ENCODE measurements at regions of chr9 and their contacts with region 1.

Region 1: DNA sequence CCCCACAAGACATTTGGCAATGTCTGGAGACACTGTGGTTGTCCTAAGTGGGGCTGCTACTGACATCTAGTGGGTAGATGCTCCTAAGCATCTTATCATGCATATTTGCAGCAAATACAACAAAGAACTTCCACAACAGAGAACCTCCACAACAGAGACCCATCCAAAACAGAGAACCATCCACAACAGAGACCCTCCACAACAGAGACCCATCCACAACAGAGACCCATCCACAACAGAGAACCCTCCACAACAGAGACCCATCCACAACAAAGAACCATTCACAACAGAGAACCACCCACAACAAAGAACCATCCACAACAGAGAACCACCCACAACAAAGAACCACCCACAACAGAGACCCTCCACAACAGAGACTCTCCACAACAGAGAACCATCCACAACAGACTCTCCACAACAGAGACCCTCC is 32.8 kb downstream of the ARPC5L start:
- DNase-seq: no peak
- H3K4me3 ChIP-seq: no peak overlapping the region
- H3K27ac ChIP-seq: no peak overlapping the region
- H3K4me1 ChIP-seq: no peaks in the 10 kb centered on the region
- H3K27me3 ChIP-seq: no peaks in the 10 kb centered on the region
- CTCF ChIP-seq: peak in 2 of 3 experiments; percentile 60 to 67; a peak in 3 of 4 replicates
- EP300 ChIP-seq: no peak
- POLR2A ChIP-seq: no peak
- RAD21 ChIP-seq: peak; percentile 69 to 85

Region 2: DNA sequence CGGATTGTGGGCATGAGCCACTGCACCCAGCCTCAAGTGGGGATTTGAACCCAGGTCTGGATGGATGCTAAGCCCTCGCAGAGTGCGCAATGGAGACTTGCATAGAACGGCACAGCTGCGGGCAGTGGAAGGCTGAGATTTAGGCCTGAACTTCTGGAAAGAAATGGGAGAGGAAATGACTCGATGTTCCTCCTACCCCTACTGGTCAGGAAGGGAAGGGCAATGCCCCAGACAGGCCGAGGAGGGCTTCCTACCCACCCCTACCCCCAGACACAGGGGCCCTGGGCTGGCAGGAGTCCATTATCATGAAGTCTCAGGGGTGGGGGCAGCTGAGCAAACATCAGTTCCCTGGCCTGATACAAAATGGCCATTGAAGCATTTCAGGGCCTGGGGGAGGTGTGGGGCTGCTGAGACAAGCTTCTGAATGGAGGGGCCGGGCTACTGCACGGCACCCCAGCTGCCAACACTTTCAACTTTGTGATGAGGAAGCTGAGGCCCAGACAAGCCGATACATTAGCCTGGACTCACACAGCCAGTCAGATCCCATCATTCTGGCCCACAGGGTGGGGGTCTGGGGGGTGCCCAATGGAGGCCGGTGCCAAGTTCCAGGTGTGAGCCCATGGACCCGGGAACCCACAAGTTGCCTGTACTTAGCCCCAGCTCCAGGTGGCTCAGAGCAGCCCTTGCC is 55.0 kb before region 1 on chr9:
- CTCF ChIA-PET with region 1: interaction called, 15 read pairs
- POLR2A ChIA-PET with region 1: no interaction called
- DNase-seq: peak in 1 of 2 experiments; percentile 84
- H3K4me3 ChIP-seq: no peak overlapping the region
- H3K27ac ChIP-seq: 0 out of 2 replicates have a peak overlapping the region, but pooled peaks have one; percentile 5
- H3K4me1 ChIP-seq: peaks cover 0 to 14% (median 3%) of the 10 kb centered on the region in 4 experiments; a peak in 4 of 7 replicates
- H3K27me3 ChIP-seq: no peaks in the 10 kb centered on the region
- CTCF ChIP-seq: peak; percentile 71 to 89 (median 78)
- EP300 ChIP-seq: no peak
- POLR2A ChIP-seq: no peak
- RAD21 ChIP-seq: peak; percentile 50 to 61

Region 3: GRCh38 chr9:124880501-124880900 is 14.3 kb before region 1 on chr9:
- CTCF ChIA-PET with region 1: interaction called, 55 read pairs
- POLR2A ChIA-PET with region 1: interaction called, 573 read pairs
- DNase-seq: peak in 1 of 2 experiments; percentile 66
- H3K4me3 ChIP-seq: peak overlapping the region in 1 of 4 experiments; percentile 27; a peak in 2 of 8 replicates
- H3K27ac ChIP-seq: no peak overlapping the region
- H3K4me1 ChIP-seq: peaks cover 5 to 18% (median 13%) of the 10 kb centered on the region in 4 experiments
- H3K27me3 ChIP-seq: no peaks in the 10 kb centered on the region
- CTCF ChIP-seq: no peak
- EP300 ChIP-seq: no peak
- POLR2A ChIP-seq: no peak
- RAD21 ChIP-seq: no peak